IMR-90 (cell line): ENCODE measurements at regions of chr21 and their contacts with region 1.

Region 1: GRCh38 chr21:26170471-26171257 is at the start of gene APP:
- DNase-seq: peak; percentile 70
- ATAC-seq: peak; percentile 79
- H3K4me3 ChIP-seq: peak within 1 kb of the TSS; percentile 62
- H3K27ac ChIP-seq: peak within 1 kb of the TSS; percentile 89
- H3K4me1 ChIP-seq: peaks cover 10% of the 10 kb centered on the region
- H3K27me3 ChIP-seq: no peaks in the 10 kb centered on the region
- CTCF ChIP-seq: peak; percentile 83
- POLR2A ChIP-seq: peak; percentile 58
- RAD21 ChIP-seq: peak; percentile 71
- total RNA-seq, gene APP: 191 and 196 TPM in 2 replicates

Region 2: GRCh38 chr21:25881525-25882376 is 288.9 kb before region 1 on chr21:
- CTCF ChIA-PET with region 1: no interaction called
- POLR2A ChIA-PET with region 1: no interaction called
- dilution Hi-C with region 1: no loop called
- in situ Hi-C with region 1: loop called (anchors 5 kb)
- intact Hi-C with region 1: loop called (anchors 1 kb)
- DNase-seq: peak; percentile 61
- ATAC-seq: peak; percentile 87
- H3K4me3 ChIP-seq: no peak overlapping the region
- H3K27ac ChIP-seq: no peak overlapping the region
- H3K4me1 ChIP-seq: no peaks in the 10 kb centered on the region
- H3K27me3 ChIP-seq: no peaks in the 10 kb centered on the region
- CTCF ChIP-seq: peak; percentile 86
- POLR2A ChIP-seq: no peak
- RAD21 ChIP-seq: peak; percentile 79

Region 3: GRCh38 chr21:25895565-25896205 is 275.0 kb before region 1 on chr21:
- CTCF ChIA-PET with region 1: interaction called, 3 read pairs
- POLR2A ChIA-PET with region 1: no interaction called
- dilution Hi-C with region 1: no loop called
- in situ Hi-C with region 1: no loop called
- intact Hi-C with region 1: loop called (anchors 1 kb)
- DNase-seq: peak; percentile 45
- ATAC-seq: peak; percentile 79
- H3K4me3 ChIP-seq: no peak overlapping the region
- H3K27ac ChIP-seq: no peak overlapping the region
- H3K4me1 ChIP-seq: no peaks in the 10 kb centered on the region
- H3K27me3 ChIP-seq: no peaks in the 10 kb centered on the region
- CTCF ChIP-seq: peak; percentile 72
- POLR2A ChIP-seq: no peak
- RAD21 ChIP-seq: peak; percentile 70

Region 4: DNA sequence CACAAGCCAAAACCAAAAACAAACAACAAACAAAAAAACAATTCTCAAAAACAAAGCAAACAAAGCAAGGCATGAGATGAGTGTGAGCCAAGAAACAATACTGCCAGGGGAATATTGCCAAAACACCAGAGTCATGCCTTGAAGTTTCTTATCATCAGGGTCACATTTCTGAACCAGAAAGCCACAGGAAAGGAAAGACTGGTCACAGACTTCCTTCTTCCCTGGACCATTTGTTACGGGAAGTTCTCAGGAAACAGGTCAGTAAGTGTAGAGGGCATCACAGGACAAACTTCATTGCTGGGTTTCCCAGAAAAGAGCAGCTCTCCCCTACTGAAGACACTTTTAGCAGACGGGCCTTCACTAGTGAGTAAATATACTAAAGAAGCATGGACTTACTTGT is 244.7 kb before region 1 on chr21:
- CTCF ChIA-PET with region 1: no interaction called
- POLR2A ChIA-PET with region 1: no interaction called
- dilution Hi-C with region 1: no loop called
- in situ Hi-C with region 1: no loop called
- intact Hi-C with region 1: no loop called
- DNase-seq: peak; percentile 23
- ATAC-seq: no peak; the same call in 1 of the 2 replicates
- H3K4me3 ChIP-seq: no peak overlapping the region
- H3K27ac ChIP-seq: no peak overlapping the region
- H3K4me1 ChIP-seq: peaks cover 7% of the 10 kb centered on the region
- H3K27me3 ChIP-seq: no peaks in the 10 kb centered on the region
- CTCF ChIP-seq: no peak
- POLR2A ChIP-seq: no peak
- RAD21 ChIP-seq: no peak

Region 5: GRCh38 chr21:26099610-26100219 is 70.9 kb before region 1 on chr21:
- CTCF ChIA-PET with region 1: no interaction called
- POLR2A ChIA-PET with region 1: interaction called, 10 read pairs
- dilution Hi-C with region 1: no loop called
- in situ Hi-C with region 1: no loop called
- intact Hi-C with region 1: no loop called
- DNase-seq: peak; percentile 70
- ATAC-seq: peak; percentile 42; the same call in 1 of the 2 replicates
- H3K4me3 ChIP-seq: no peak overlapping the region
- H3K27ac ChIP-seq: no peak overlapping the region
- H3K4me1 ChIP-seq: peaks cover 1% of the 10 kb centered on the region; the same call in 1 of the 2 replicates
- H3K27me3 ChIP-seq: no peaks in the 10 kb centered on the region
- CTCF ChIP-seq: no peak
- POLR2A ChIP-seq: no peak
- RAD21 ChIP-seq: no peak

Region 6: GRCh38 chr21:26715878-26716506 is 545.3 kb after region 1 on chr21:
- CTCF ChIA-PET with region 1: interaction called, 3 read pairs
- POLR2A ChIA-PET with region 1: no interaction called
- dilution Hi-C with region 1: no loop called
- in situ Hi-C with region 1: no loop called
- intact Hi-C with region 1: loop called (anchors 5 kb)
- DNase-seq: peak; percentile 51
- ATAC-seq: peak; percentile 94
- H3K4me3 ChIP-seq: no peak overlapping the region
- H3K27ac ChIP-seq: no peak overlapping the region
- H3K4me1 ChIP-seq: no peaks in the 10 kb centered on the region
- H3K27me3 ChIP-seq: no peaks in the 10 kb centered on the region
- CTCF ChIP-seq: peak; percentile 66
- POLR2A ChIP-seq: no peak
- RAD21 ChIP-seq: peak; percentile 55